Activated CD8-positive, alpha-beta T cell treated with anti-CD3 and anti-CD28 coated beads for 36 hours (primary cell): ENCODE measurements at regions of chr16 and their contacts with region 1.

Region 1: DNA sequence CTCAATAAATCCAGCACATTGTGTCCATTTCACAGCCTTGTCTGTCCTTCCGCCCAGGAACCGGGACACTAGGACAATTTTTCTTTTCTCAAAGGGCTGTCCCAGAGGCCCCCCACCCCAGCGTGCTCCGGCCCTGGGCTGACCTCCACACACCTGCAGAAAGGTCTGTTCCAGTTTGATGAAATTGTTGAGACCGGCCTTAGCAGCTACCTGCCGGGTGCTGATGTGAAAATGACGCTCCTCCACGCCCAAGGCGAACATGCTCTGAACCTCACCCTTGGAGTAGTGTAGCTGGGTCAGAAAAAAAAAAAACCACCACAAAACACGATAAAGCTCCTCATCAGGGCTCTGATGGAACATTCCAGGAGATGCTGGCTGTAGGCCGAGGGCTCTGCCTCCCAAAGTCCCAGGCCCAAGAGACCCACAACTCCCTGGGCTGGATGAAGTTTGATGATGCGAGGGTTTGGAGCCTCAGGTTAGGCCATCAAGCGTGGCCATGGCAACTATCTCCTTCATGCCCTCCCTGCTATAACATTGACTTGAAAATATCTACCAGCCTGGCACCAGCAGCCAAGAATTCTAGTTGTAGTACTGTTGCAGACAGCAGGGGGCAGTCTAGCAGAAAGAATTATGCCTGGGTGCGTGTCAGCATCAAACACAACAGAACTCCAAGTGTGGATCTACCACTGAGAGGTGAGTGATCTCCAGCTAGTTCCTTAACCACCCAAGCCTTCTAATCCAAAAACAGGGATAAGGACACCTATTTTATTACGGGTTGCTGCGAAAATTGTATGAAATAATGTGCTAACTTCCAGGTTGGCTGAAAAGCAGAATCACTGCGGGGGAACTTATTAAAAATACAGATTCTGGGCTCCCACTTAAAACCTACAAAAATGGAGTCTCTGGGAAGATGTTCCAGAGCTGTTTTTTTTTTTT is 62.1 kb downstream of the RMI2 start:
- DNase-seq: peak; percentile 80
- ATAC-seq: peak; percentile 59
- H3K4me3 Mint-ChIP-seq: no peak overlapping the region
- H3K27ac Mint-ChIP-seq: no peak overlapping the region
- H3K4me1 Mint-ChIP-seq: no peaks in the 10 kb centered on the region
- H3K27me3 Mint-ChIP-seq: no peaks in the 10 kb centered on the region
- CTCF ChIP-seq: peak; percentile 85

Region 2: GRCh38 chr16:10949370-10949970 is 457.8 kb before region 1 on chr16:
- CTCF ChIA-PET with region 1: interaction called, 11 read pairs
- POLR2A ChIA-PET with region 1: no interaction called
- intact Hi-C with region 1: no loop called
- DNase-seq: peak; percentile 75
- ATAC-seq: peak; percentile 83
- H3K4me3 Mint-ChIP-seq: peak overlapping the region; percentile 18
- H3K27ac Mint-ChIP-seq: peak overlapping the region; percentile 68
- H3K4me1 Mint-ChIP-seq: peaks cover 57% of the 10 kb centered on the region
- H3K27me3 Mint-ChIP-seq: no peaks in the 10 kb centered on the region
- CTCF ChIP-seq: peak; percentile 43

Region 3: DNA sequence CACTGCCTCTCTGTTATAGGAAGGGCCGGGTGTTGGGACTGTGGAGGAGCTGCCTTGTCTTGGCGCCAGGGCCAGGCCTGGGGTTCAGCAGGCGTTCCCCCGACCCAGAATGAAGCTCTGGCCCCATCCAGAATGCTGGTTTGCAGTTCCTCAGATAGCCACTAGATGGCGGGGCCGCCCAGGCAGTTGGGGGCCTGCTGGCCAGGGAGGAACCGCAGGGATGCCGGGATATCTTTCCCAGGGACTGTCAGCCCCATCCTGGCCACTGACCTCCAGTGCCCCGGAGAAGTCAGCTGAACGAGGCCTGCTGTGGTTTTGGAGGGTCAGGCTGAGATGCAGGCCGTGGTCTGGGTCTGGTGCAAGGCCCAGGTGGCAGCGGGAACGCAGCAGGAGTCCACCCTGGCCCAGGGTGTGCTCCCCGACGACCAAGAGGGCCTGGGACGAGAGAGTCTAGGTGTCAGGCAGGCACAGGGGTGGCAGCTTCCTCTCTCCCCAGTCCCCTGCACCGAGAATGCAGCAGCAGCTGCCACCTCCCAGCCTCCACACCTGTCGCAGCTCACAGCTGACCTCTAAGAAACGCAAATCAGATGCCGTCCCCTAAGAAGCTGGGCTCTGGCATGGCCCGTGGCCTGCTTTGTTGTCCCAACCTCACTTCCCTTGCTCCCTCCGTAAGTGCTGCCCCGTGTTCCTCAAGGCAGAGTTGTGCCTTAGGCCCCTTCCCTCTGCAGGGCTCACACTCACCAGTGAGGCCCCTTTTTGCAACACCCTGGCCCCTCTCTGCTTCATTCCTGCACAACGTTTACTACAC is 10.9 kb before region 1 on chr16:
- CTCF ChIA-PET with region 1: interaction called, 89 read pairs
- POLR2A ChIA-PET with region 1: no interaction called
- intact Hi-C with region 1: no loop called
- DNase-seq: peak; percentile 72
- ATAC-seq: peak; percentile 92
- H3K4me3 Mint-ChIP-seq: no peak overlapping the region
- H3K27ac Mint-ChIP-seq: peak overlapping the region; percentile 25
- H3K4me1 Mint-ChIP-seq: no peaks in the 10 kb centered on the region
- H3K27me3 Mint-ChIP-seq: no peaks in the 10 kb centered on the region
- CTCF ChIP-seq: peak; percentile 100

Region 4: DNA sequence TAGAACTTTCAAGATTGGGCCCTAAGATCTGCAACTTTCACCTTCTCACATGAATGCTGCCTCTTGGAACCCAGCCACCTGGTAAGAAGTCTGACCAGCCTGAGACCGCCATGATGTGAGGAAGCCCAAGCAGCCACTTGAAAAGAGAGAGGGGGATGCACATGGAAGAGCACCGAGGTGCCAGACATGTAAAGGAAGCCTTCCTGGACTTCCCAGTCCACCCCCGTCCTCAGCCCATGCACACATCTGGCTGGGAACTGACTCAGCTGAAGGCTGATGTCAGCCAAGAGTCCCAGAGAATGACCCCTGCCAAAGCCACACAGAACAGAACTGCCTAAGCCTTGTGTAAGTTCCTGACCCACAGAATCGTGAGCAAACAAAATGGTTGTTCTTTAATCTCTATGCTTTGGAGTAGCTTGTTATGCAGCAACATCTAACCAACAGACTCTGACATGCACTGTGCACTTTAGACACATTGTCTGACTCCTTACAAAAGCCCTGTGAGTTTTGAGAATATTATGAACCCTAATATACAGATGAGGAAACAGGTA is 24.7 kb after region 1 on chr16:
- CTCF ChIA-PET with region 1: interaction called, 19 read pairs
- POLR2A ChIA-PET with region 1: no interaction called
- intact Hi-C with region 1: no loop called
- DNase-seq: no peak
- ATAC-seq: no peak
- H3K4me3 Mint-ChIP-seq: no peak overlapping the region
- H3K27ac Mint-ChIP-seq: no peak overlapping the region
- H3K4me1 Mint-ChIP-seq: no peaks in the 10 kb centered on the region
- H3K27me3 Mint-ChIP-seq: no peaks in the 10 kb centered on the region
- CTCF ChIP-seq: no peak

Region 5: GRCh38 chr16:11639925-11640899 is 232.9 kb after region 1 on chr16:
- CTCF ChIA-PET with region 1: interaction called, 34 read pairs
- POLR2A ChIA-PET with region 1: no interaction called
- intact Hi-C with region 1: loop called (anchors 5 kb)
- DNase-seq: no peak
- ATAC-seq: peak; percentile 21
- H3K4me3 Mint-ChIP-seq: no peak overlapping the region
- H3K27ac Mint-ChIP-seq: no peak overlapping the region
- H3K4me1 Mint-ChIP-seq: peaks cover 10% of the 10 kb centered on the region
- H3K27me3 Mint-ChIP-seq: no peaks in the 10 kb centered on the region
- CTCF ChIP-seq: no peak

Region 6: GRCh38 chr16:11819798-11820197 is 412.5 kb after region 1 on chr16:
- CTCF ChIA-PET with region 1: interaction called, 3 read pairs
- POLR2A ChIA-PET with region 1: interaction called, 3 read pairs
- intact Hi-C with region 1: loop called (anchors 5 kb)
- DNase-seq: no peak
- ATAC-seq: no peak
- H3K4me3 Mint-ChIP-seq: no peak overlapping the region
- H3K27ac Mint-ChIP-seq: no peak overlapping the region
- H3K4me1 Mint-ChIP-seq: no peaks in the 10 kb centered on the region
- H3K27me3 Mint-ChIP-seq: no peaks in the 10 kb centered on the region
- CTCF ChIP-seq: no peak